ENCODE measurements at regions of chr6 and their contacts with region 1.

Region 1: DNA sequence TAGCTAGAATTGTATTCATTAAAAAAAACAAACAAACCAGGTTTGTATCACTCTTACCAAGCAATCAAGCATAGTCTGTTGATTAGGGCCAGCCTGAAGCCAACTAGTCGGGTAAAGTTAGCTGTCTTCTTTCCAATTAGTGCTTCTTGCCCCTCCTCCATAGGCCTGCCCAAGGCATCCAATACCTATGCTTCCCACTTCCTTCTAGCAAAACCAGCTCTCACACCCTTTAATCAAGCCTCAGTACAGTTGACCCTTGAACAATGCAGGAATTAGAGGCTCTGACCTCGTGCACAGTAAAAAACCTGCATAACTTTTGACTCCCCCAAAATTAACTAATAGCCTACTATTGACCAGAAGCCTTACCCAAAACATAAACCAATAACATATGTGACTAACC is 119.1 kb upstream of the DTNBP1 start:
- DNase-seq: no peak
- ATAC-seq: no peak
- H3K4me3 ChIP-seq: no peak overlapping the region
- H3K27ac ChIP-seq: no peak overlapping the region
- H3K4me1 ChIP-seq: no peaks in the 10 kb centered on the region
- H3K27me3 ChIP-seq: no peaks in the 10 kb centered on the region
- CTCF ChIP-seq: no peak
- EP300 ChIP-seq: no peak
- POLR2A ChIP-seq: no peak
- RAD21 ChIP-seq: no peak

Region 2: DNA sequence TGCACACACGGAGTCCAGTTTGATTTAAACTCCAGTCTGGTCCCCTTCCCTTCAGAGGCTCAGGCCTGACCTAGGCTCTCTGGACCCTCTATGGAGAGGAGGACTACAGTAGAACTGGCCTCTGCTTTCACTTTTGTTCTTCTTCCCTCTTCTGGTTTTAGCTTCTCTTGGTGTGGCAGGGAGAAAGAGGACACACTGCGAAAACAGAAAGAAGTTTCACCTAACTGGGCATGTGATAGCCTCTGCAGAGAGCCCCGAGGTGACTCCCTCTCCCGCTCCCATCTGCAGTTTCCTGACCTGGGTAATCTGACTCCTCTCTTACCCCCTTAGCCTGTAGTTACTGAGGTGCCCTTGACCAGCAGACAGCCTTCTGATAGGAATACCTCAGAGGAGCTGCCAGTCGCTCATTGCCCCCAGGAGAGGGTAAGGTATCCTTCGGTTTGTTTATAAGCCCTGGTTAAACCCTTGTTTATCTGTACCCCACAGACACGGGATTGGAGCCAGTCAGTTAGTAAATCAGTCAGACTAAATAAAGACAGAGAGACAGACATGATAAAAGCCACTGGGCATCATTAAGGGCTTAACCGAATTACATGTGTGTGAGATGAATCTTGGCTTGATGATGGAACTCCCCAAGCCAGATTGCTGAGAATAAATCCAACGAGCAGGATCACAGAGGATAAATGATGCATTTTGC is 107.1 kb before region 1 on chr6:
- CTCF ChIA-PET with region 1: no interaction called
- POLR2A ChIA-PET with region 1: no interaction called
- RAD21 ChIA-PET with region 1: no interaction called
- SMC1A ChIA-PET with region 1: no interaction called
- in situ Hi-C with region 1: no loop called
- intact Hi-C with region 1: no loop called
- DNase-seq: no peak
- ATAC-seq: no peak; the same call in 1 of the 3 replicates
- H3K4me3 ChIP-seq: no peak overlapping the region; the same call in 1 of the 2 replicates
- H3K27ac ChIP-seq: no peak overlapping the region
- H3K4me1 ChIP-seq: no peaks in the 10 kb centered on the region
- H3K27me3 ChIP-seq: no peaks in the 10 kb centered on the region
- CTCF ChIP-seq: no peak
- EP300 ChIP-seq: no peak
- POLR2A ChIP-seq: no peak
- RAD21 ChIP-seq: no peak

Region 3: GRCh38 chr6:15793288-15793687 is 11.4 kb after region 1 on chr6:
- CTCF ChIA-PET with region 1: interaction called, 19 read pairs
- POLR2A ChIA-PET with region 1: interaction called, 7 read pairs
- RAD21 ChIA-PET with region 1: interaction called, 4 read pairs
- SMC1A ChIA-PET with region 1: interaction called, 13 read pairs
- in situ Hi-C with region 1: no loop called
- intact Hi-C with region 1: no loop called
- DNase-seq: no peak
- ATAC-seq: no peak
- H3K4me3 ChIP-seq: no peak overlapping the region
- H3K27ac ChIP-seq: no peak overlapping the region
- H3K4me1 ChIP-seq: no peaks in the 10 kb centered on the region
- H3K27me3 ChIP-seq: no peaks in the 10 kb centered on the region
- CTCF ChIP-seq: no peak
- EP300 ChIP-seq: no peak
- POLR2A ChIP-seq: no peak
- RAD21 ChIP-seq: no peak

Region 4: GRCh38 chr6:16041327-16041726 is 259.4 kb after region 1 on chr6:
- CTCF ChIA-PET with region 1: no interaction called
- POLR2A ChIA-PET with region 1: no interaction called
- RAD21 ChIA-PET with region 1: no interaction called
- SMC1A ChIA-PET with region 1: no interaction called
- in situ Hi-C with region 1: no loop called
- intact Hi-C with region 1: no loop called
- DNase-seq: no peak
- ATAC-seq: peak; percentile 35; the same call in 2 of the 3 replicates
- H3K4me3 ChIP-seq: no peak overlapping the region; the same call in 1 of the 2 replicates
- H3K27ac ChIP-seq: peak overlapping the region; percentile 55
- H3K4me1 ChIP-seq: peaks cover 29% of the 10 kb centered on the region
- H3K27me3 ChIP-seq: no peaks in the 10 kb centered on the region
- CTCF ChIP-seq: no peak
- EP300 ChIP-seq: no peak
- POLR2A ChIP-seq: no peak
- RAD21 ChIP-seq: no peak

Measured in GM12878 (cell line).